HEK293T (cell line): ENCODE measurements at regions of chr7 and their contacts with region 1.

Region 1: GRCh38 chr7:106056513-106057203 is 55.5 kb downstream of the SYPL1 start:
- DNase-seq: peak; percentile 82

Region 2: DNA sequence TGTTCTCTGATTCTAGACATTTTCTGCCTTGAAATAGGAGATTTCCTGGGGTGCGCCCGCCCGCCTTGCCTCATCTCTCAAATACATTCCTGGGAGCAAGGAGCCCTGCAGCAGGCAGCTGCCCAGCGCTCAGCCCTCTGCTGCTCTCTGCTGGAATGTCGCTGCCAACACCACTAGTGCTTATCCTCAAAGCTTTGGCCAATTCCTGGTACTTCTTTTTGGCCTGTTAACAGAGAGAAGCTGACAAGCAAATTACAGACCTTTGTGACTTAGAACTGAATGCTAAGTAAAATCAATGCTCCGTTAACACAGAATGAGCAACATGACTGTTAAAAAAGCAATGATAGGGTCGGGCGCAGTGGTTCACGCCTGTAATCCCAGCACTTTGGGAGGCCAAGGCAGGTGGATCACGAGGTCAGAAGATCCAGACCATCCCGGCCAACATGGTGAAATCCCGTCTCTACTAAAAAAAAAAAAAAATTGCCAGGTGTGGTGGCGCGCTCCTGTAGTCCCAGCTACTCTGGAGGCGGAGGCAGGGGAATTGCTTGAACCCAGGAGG is 97.3 kb after region 1 on chr7:
- CTCF ChIA-PET with region 1: interaction called, 14 read pairs
- POLR2A ChIA-PET with region 1: no interaction called
- DNase-seq: peak; percentile 86

Region 3: GRCh38 chr7:106205621-106206222 is 149.1 kb after region 1 on chr7:
- CTCF ChIA-PET with region 1: no interaction called
- POLR2A ChIA-PET with region 1: no interaction called
- DNase-seq: no peak

Region 4: DNA sequence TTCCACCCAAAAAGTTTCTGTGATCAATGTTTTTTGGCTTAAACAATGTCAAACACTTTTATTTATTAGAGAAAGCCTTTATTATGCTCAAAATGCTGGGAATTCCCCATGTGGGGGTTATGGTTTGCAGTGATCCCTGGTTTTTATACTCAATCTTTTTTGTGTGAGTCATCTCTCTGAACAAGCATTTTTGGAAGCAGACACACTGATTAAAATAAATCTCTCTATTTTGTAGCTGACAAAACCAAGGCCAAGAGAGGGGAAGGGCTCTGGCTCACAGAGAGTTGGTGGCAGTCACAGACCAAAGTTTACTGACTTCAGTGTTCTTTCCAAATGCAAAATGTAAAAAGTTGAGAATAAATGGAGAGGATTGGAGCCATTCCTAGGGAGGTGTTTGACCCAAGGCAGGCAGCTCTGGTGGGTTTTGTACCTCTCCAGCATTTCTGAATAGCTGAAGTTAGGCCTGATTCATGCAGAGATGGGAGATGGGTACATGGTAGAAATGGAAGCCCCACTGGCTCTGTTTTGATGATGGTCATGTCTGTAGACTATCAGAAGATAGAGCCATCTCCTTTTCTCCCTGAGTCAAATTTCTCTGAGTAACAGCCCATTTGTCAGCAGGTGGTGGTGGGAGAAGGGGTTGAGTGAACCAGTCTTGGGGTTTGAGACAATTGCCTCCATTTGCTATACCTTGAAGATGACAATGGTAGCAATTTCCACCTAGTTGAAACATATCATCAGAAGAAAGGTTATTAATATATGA is 273.5 kb after region 1 on chr7:
- CTCF ChIA-PET with region 1: no interaction called
- POLR2A ChIA-PET with region 1: no interaction called
- DNase-seq: no peak